AG04450 (cell line): ENCODE measurements at regions of chr5 and their contacts with region 1.

Region 1: GRCh38 chr5:106269252-106269843 is 1401.4 kb downstream of the EFNA5 start:
- DNase-seq: no peak
- H3K4me3 ChIP-seq: no peak overlapping the region
- H3K27ac ChIP-seq: no peak overlapping the region
- H3K27me3 ChIP-seq: no peaks in the 10 kb centered on the region
- CTCF ChIP-seq: peak; percentile 75

Region 2: DNA sequence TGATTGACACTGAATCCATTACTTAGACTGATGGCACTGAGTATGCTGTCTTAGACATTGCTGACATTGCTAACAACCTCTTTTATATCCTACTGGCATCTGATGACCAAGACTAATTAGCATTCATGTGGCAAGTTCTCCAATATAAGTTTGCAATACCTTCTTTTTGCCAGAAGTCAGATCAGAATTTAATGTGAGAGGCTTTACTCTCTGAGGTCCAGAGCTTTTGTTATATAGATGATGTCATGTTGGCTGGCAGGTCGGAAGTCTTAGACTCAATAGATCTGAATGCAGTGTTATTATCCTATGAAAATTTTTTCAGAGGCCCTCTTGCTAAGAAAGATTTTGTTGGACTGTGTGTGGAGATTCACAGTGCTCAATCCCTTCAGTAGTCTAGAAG is 599.2 kb before region 1 on chr5:
- CTCF ChIA-PET with region 1: no interaction called
- POLR2A ChIA-PET with region 1: no interaction called
- DNase-seq: no peak
- H3K4me3 ChIP-seq: no peak overlapping the region
- H3K27ac ChIP-seq: no peak overlapping the region
- H3K27me3 ChIP-seq: no peaks in the 10 kb centered on the region
- CTCF ChIP-seq: no peak

Region 3: DNA sequence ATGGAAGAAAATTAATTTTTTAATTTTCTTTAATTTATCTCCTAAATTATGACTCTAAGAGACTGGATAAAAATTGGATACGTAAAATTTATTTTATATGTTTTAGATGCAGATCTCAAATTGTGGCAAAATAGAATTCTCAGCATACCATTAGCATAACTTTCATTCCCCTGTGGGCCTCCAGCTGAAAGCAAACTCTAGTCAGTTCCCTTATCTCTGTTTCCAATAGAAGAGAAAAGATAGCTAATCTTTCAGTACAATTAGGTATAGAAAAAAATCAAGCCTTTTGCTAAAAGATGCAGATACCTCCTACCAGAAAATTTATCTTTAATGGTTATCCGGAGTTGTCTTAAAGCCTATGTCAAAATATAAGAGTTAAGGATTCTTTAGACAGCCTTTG is 129.2 kb before region 1 on chr5:
- CTCF ChIA-PET with region 1: no interaction called
- POLR2A ChIA-PET with region 1: no interaction called
- DNase-seq: no peak
- H3K4me3 ChIP-seq: no peak overlapping the region
- H3K27ac ChIP-seq: no peak overlapping the region
- H3K27me3 ChIP-seq: no peaks in the 10 kb centered on the region
- CTCF ChIP-seq: no peak

Region 4: GRCh38 chr5:106258591-106259125 is 10.7 kb before region 1 on chr5:
- CTCF ChIA-PET with region 1: interaction called, 10 read pairs
- POLR2A ChIA-PET with region 1: no interaction called
- DNase-seq: no peak
- H3K4me3 ChIP-seq: no peak overlapping the region
- H3K27ac ChIP-seq: no peak overlapping the region
- H3K27me3 ChIP-seq: no peaks in the 10 kb centered on the region
- CTCF ChIP-seq: no peak